Activated B cell treated with CpG ODN at 0.5 μM for 24 hours (primary cell): ENCODE measurements at regions of chr5 and their contacts with region 1.

Region 1: GRCh38 chr5:72847989-72848473 is 31.6 kb downstream of the TNPO1 start:
- DNase-seq: peak; percentile 82
- ATAC-seq: peak; percentile 73
- H3K4me3 Mint-ChIP-seq: peak overlapping the region; percentile 96
- H3K27ac Mint-ChIP-seq: peak overlapping the region; percentile 96
- H3K4me1 Mint-ChIP-seq: peaks cover 56% of the 10 kb centered on the region
- H3K27me3 Mint-ChIP-seq: no peaks in the 10 kb centered on the region
- CTCF ChIP-seq: no peak

Region 2: GRCh38 chr5:72366324-72366976 is 481.6 kb before region 1 on chr5:
- CTCF ChIA-PET with region 1: no interaction called
- POLR2A ChIA-PET with region 1: no interaction called
- intact Hi-C with region 1: loop called (anchors 10 kb)
- DNase-seq: no peak
- ATAC-seq: peak; percentile 68
- H3K4me3 Mint-ChIP-seq: no peak overlapping the region
- H3K27ac Mint-ChIP-seq: no peak overlapping the region
- H3K4me1 Mint-ChIP-seq: peaks cover 11% of the 10 kb centered on the region
- H3K27me3 Mint-ChIP-seq: no peaks in the 10 kb centered on the region
- CTCF ChIP-seq: no peak

Region 3: GRCh38 chr5:72408602-72409001 is 439.4 kb before region 1 on chr5:
- CTCF ChIA-PET with region 1: no interaction called
- POLR2A ChIA-PET with region 1: no interaction called
- intact Hi-C with region 1: no loop called
- DNase-seq: no peak
- ATAC-seq: no peak
- H3K4me3 Mint-ChIP-seq: no peak overlapping the region
- H3K27ac Mint-ChIP-seq: no peak overlapping the region
- H3K4me1 Mint-ChIP-seq: no peaks in the 10 kb centered on the region
- H3K27me3 Mint-ChIP-seq: peaks cover 8% of the 10 kb centered on the region
- CTCF ChIP-seq: no peak

Region 4: GRCh38 chr5:72611118-72611730 is 236.8 kb before region 1 on chr5:
- CTCF ChIA-PET with region 1: interaction called, 8 read pairs
- POLR2A ChIA-PET with region 1: no interaction called
- intact Hi-C with region 1: loop called (anchors 1 kb)
- DNase-seq: no peak
- ATAC-seq: peak; percentile 69
- H3K4me3 Mint-ChIP-seq: no peak overlapping the region
- H3K27ac Mint-ChIP-seq: no peak overlapping the region
- H3K4me1 Mint-ChIP-seq: peaks cover 4% of the 10 kb centered on the region
- H3K27me3 Mint-ChIP-seq: peaks cover 12% of the 10 kb centered on the region
- CTCF ChIP-seq: no peak